Ovary (tissue), 10 donors: ENCODE measurements at regions of chr3 and their contacts with region 1.

Region 1: DNA sequence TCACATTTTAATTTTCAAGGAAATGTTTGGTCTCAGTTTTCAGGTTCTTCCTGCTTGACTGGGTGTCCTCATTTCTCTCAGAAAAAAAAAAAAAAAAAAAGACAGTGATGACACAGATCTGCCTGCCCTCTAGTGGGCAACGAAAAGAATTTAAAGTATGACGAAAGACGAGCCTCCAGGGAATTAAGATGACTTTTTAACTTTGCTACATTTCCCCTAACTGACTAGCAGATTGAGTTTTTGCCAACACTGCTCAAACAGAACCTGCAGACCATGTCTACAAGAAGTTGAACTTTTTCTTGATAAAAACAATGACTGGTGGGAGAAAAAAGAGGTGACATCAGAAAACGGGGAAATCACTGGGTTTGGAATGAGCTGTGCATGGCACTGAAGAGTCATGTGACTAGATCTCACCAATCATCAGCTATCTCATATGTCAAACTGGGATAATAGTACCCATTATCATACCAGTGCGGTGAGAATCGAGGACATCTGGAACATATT is 40.8 kb downstream of the EOMES start:
- DNase-seq: peak in 1 of 5 donors; percentile 29
- H3K4me3 ChIP-seq: no peak overlapping the region
- H3K27ac ChIP-seq: no peak overlapping the region
- H3K4me1 ChIP-seq: peaks cover 8% of the 10 kb centered on the region
- H3K27me3 ChIP-seq: no peaks in the 10 kb centered on the region
- CTCF ChIP-seq: peak; percentile 45 to 62 (median 52)
- EP300 ChIP-seq: no peak
- POLR2A ChIP-seq: no peak

Region 2: DNA sequence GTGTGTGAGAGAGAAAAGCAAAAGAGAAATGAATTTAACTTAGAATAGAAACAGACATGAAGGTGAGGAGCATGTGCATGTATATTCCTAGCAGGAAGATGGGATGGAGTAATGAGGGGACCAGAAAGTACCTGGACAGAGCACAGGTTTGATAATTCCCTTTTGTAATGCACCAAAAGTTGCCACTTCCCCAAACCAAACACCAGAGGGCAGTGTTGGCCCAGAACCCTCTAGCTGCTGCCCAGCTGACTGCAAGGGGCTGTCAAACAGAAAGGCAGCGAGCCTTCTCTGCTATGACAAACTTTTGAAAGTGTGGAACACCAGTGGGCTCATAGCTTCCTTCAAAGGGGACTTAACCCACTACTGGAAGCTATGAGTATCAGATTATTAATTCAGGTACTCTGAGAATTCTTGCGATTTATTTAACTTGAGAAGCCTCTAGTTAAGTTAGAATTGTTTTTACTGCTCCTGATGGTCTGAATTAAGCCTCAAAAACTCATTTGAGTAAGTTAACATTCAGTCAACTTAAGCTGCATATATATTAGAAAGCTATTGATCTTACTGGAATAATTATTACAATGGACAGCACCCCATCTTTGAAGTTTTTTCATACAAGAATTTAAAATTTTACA is 547.0 kb before region 1 on chr3:
- intact Hi-C with region 1: loop called in 1 of 4 experiments (anchors 5 kb)
- DNase-seq: peak; percentile 26 to 57 (median 51)
- H3K4me3 ChIP-seq: no peak overlapping the region
- H3K27ac ChIP-seq: no peak overlapping the region
- H3K4me1 ChIP-seq: peaks cover 5% of the 10 kb centered on the region
- H3K27me3 ChIP-seq: no peaks in the 10 kb centered on the region
- CTCF ChIP-seq: peak; percentile 29 to 60 (median 52)
- EP300 ChIP-seq: no peak
- POLR2A ChIP-seq: no peak

Region 3: DNA sequence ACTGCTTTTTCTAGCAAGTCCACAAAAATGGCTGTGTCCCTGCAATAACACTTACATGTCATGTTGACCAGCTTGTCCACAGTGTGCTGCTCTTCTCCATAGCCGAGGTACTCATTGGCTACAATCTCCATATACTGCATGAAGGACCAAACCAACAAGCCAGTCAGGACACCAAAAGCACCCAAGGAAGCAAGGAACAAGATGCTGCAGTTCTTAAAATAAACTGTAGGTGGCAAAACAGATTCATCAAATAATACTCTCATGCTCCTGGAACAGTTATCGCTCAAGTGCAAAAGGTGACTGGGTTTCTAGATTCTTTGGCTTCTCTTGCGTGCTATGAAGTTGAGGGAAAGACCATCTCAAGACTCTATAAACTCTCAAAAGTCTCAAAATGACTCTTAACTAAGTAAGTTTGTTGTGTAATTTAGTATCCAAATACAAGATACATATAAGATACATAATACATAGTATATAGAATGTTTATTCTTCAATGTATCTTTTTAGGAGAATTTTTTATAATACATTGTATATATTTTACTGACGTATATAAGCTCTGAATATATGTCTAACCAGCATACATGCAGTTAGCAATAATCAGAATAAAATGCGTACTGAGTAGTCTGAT is 369.1 kb before region 1 on chr3:
- intact Hi-C with region 1: loop called in 1 of 4 experiments (anchors 2 kb)
- DNase-seq: no peak
- H3K4me3 ChIP-seq: no peak overlapping the region
- H3K27ac ChIP-seq: no peak overlapping the region
- H3K4me1 ChIP-seq: no peaks in the 10 kb centered on the region
- H3K27me3 ChIP-seq: no peaks in the 10 kb centered on the region
- CTCF ChIP-seq: peak; percentile 61 to 77 (median 73)
- EP300 ChIP-seq: no peak
- POLR2A ChIP-seq: no peak

Region 4: DNA sequence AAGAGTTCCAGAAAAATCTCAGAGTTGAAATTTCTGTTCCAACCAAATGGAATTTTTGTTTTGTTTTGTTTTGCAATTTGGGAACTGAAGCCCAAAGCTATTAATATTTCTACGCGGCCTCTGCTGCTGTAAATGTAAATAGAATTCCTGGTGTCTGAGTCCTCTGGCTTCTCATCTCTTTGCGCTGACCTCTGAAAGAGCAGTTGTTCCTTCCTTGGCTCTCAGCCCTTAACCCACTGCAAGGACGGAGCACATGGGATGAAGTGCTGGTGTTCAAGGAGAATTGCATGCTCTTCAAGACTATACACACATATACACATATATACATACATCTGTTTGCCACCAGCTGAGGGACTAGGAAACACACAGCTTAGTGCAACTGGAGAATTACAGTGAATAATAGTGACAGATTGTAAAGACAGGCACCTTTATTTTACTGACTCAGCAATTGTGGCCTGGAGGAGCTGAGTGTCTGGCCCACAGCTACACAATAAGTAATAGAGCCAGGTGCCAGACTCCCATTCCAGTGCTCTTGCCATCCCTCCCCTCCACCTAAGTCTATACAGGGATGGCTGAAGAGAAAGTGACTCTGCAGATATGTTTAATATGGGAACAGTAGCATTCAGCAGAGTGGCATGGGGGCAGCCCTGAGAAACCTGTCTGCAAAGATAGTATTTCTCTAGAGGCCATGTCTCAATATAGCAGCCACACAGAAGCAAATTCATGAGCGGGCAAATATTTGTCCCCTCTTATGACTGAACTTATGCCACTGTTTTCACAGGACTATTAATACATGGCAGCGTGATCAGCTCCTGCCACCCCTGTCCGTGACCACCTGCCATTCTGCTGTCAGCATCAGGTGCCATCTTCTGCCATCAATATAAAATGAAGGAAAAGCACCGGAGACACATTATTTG is 354.4 kb before region 1 on chr3:
- intact Hi-C with region 1: loop called in 1 of 4 experiments (anchors 10 kb)
- DNase-seq: peak; percentile 53 to 65 (median 56)
- H3K4me3 ChIP-seq: no peak overlapping the region
- H3K27ac ChIP-seq: peak overlapping the region in 1 of 2 donors; percentile 49
- H3K4me1 ChIP-seq: peaks cover 17% of the 10 kb centered on the region
- H3K27me3 ChIP-seq: no peaks in the 10 kb centered on the region
- CTCF ChIP-seq: no peak
- EP300 ChIP-seq: no peak
- POLR2A ChIP-seq: no peak